Right ventricle myocardium inferior (tissue), 1 donor: ENCODE measurements at regions of chr1 and their contacts with region 1.

Region 1: DNA sequence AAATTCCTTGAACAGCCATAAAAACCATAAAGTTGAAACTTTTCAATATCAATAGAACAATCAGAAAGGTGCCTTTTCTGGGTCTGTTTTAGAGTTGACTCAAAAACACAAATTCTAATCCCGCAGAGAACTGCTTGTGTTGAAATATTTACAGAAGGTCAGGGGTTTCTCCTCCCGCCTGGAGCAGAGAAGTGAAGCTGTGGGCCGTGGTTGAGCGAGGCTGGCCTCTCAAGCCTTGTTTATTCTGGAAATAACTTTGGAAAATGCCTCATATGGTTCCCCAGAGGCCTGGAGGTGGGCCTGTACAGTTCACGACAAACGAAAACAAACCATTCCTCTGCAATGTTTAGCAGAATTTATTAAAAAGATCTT is 90.8 kb upstream of the ERRFI1 start:
- DNase-seq: peak; percentile 80
- ATAC-seq: peak; percentile 94

Region 2: GRCh38 chr1:8083739-8084484 is 33.0 kb before region 1 on chr1:
- intact Hi-C with region 1: loop called (anchors 5 kb)
- DNase-seq: no peak
- ATAC-seq: peak; percentile 37

Region 3: GRCh38 chr1:8217011-8217711 is 100.3 kb after region 1 on chr1:
- intact Hi-C with region 1: loop called (anchors 5 kb)
- DNase-seq: peak; percentile 72
- ATAC-seq: peak; percentile 87